ENCODE measurements at regions of chr9 and their contacts with region 1.

Region 1: GRCh38 chr9:95127249-95128176 is 190.0 kb downstream of the FANCC start:
- DNase-seq: peak; percentile 57 to 94
- H3K4me3 ChIP-seq: peak overlapping the region; percentile 51 to 62
- H3K27ac ChIP-seq: peak overlapping the region; percentile 52 to 72
- H3K4me1 ChIP-seq: peaks cover 9 to 18% of the 10 kb centered on the region in 2 donors
- H3K27me3 ChIP-seq: no peaks in the 10 kb centered on the region
- CTCF ChIP-seq: peak; percentile 96 to 98 (median 97)

Region 2: DNA sequence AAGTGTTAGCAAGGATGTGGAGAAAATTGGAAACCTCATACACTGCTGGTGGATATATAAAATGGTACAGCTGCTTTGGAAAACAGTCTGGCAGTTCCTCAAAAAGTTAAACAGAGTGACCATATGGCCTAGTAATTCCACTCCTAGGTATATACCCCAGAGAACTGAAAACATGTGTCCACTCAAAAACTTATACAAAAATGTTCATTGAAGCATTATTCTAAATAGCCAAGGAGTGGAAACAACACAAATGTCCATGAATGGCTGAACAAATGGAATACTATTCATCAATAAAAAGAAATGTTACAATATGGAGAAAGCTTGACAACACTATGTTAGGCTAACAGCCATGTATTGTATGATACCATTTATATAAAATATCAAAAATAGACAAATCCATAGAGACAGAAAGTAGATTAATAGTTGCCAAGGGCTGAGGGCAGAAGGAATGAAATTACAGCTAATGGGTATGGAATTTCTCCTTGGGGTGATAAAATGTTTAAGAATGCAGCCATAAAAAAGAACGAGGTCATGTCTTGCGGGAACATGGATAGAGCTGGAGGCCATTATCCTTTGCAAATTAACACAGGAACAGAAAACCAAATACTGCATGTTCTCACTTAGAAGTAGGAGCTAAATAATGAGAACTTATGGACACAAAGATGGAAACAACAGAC is 454.6 kb before region 1 on chr9:
- intact Hi-C with region 1: loop called (anchors 1 kb)
- DNase-seq: no peak
- H3K4me3 ChIP-seq: no peak overlapping the region
- H3K27ac ChIP-seq: peak overlapping the region; percentile 5 to 9
- H3K4me1 ChIP-seq: peaks cover 7 to 17% of the 10 kb centered on the region in 2 donors
- H3K27me3 ChIP-seq: no peaks in the 10 kb centered on the region
- CTCF ChIP-seq: no peak

Region 3: GRCh38 chr9:94681508-94681907 is 446.0 kb before region 1 on chr9:
- intact Hi-C with region 1: loop called (anchors 1 kb)
- DNase-seq: peak in 1 of 2 donors; percentile 90
- H3K4me3 ChIP-seq: no peak overlapping the region
- H3K27ac ChIP-seq: peak overlapping the region; percentile 27 to 47
- H3K4me1 ChIP-seq: peaks cover 0 to 12% of the 10 kb centered on the region in 2 donors
- H3K27me3 ChIP-seq: no peaks in the 10 kb centered on the region
- CTCF ChIP-seq: peak; percentile 67 to 78 (median 76)

Region 4: GRCh38 chr9:94726495-94727191 is 400.9 kb before region 1 on chr9 and contains the start of gene AOPEP:
- intact Hi-C with region 1: loop called (anchors 5 kb)
- DNase-seq: peak; percentile 89 to 99
- H3K4me3 ChIP-seq: peak within 1 kb of the TSS; percentile 66 to 89
- H3K27ac ChIP-seq: peak within 1 kb of the TSS; percentile 83
- H3K4me1 ChIP-seq: peaks cover 0 to 9% of the 10 kb centered on the region in 2 donors
- H3K27me3 ChIP-seq: no peaks in the 10 kb centered on the region
- CTCF ChIP-seq: no peak
- total RNA-seq, gene AOPEP: 333 TPM

Region 5: GRCh38 chr9:94783102-94783664 is 344.3 kb before region 1 on chr9:
- intact Hi-C with region 1: loop called (anchors 5 kb)
- DNase-seq: peak in 1 of 2 donors; percentile 91
- H3K4me3 ChIP-seq: no peak overlapping the region
- H3K27ac ChIP-seq: peak overlapping the region; percentile 83 to 84
- H3K4me1 ChIP-seq: peaks cover 0 to 34% of the 10 kb centered on the region in 2 donors
- H3K27me3 ChIP-seq: no peaks in the 10 kb centered on the region
- CTCF ChIP-seq: peak; percentile 64 to 69 (median 68)

Region 6: DNA sequence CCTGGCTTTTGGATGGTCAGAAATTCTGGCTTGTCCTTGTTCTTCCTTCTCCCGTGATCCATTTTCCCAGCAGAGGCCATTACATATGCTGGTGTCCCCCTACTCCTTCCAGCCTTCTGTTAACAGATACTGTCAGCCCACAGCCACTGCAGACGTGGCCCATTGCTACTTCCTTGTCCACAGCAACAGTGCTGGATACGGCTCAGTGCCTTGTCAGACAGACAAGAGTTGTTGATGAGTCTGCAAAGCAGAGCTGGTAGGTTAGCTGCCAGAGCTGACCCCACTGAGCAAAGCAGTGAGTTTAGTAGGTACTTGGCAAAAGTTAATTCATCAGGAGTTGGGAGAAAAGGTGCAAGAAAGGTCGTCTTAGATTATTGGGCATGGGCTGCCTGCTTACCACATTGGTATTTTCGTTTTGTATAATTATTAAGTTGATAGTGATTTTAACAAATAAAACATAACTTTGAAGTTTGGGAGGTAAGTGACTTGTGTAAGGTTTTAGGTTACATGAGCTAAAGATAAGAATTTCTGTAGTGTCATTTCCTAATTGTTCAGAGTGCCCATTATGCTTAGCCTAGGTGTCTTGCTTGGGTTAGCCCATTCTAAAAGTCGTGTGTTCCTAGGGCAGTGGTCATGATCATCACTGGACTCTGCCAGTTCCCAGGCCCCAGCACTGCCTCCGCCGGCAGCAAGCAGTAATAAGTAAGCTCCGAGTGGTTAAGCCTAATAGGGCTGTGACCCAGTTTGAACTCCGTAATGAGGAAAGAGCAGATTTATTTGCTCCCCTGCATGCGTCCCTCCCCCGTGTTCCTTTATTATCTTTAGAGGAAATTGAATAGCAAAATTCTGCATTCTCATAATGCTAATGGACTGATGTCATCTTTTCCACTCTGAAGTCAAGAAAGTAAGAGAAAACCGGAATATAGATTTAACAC is 102.0 kb before region 1 on chr9:
- intact Hi-C with region 1: loop called (anchors 2 kb)
- DNase-seq: peak in 1 of 2 donors; percentile 93
- H3K4me3 ChIP-seq: peak overlapping the region; percentile 27 to 45
- H3K27ac ChIP-seq: peak overlapping the region; percentile 81 to 99
- H3K4me1 ChIP-seq: peaks cover 26 to 89% of the 10 kb centered on the region in 2 donors
- H3K27me3 ChIP-seq: no peaks in the 10 kb centered on the region
- CTCF ChIP-seq: peak; percentile 45 to 52 (median 46)

Region 7: GRCh38 chr9:95087659-95088242 is 39.8 kb before region 1 on chr9:
- intact Hi-C with region 1: loop called (anchors 2 kb)
- DNase-seq: no peak
- H3K4me3 ChIP-seq: peak overlapping the region in 1 of 2 donors; percentile 1
- H3K27ac ChIP-seq: peak overlapping the region; percentile 94 to 95
- H3K4me1 ChIP-seq: peaks cover 51 to 83% of the 10 kb centered on the region in 2 donors
- H3K27me3 ChIP-seq: no peaks in the 10 kb centered on the region
- CTCF ChIP-seq: peak in 1 of 3 experiments; percentile 12